Activated T-helper 2 cell treated with anti-CD3 and anti-CD28 coated beads, Interferon-gamma antibody, Interleukin-2, Interleukin-4, amounts not matched to agents 10 μg/mL and 5 μg/mL and 100 μg/mL, durations not matched to agents 14 hours and 24 hours and 36 hours (primary cell): ENCODE measurements at regions of chr1 and their contacts with region 1.

Region 1: GRCh38 chr1:28115267-28115666 is 26.9 kb upstream of the EYA3 start:
- DNase-seq: peak; percentile 36
- H3K4me3 Mint-ChIP-seq: no peak overlapping the region
- H3K27ac Mint-ChIP-seq: no peak overlapping the region
- H3K4me1 Mint-ChIP-seq: peaks cover 20% of the 10 kb centered on the region
- H3K27me3 Mint-ChIP-seq: peaks cover 50% of the 10 kb centered on the region

Region 2: DNA sequence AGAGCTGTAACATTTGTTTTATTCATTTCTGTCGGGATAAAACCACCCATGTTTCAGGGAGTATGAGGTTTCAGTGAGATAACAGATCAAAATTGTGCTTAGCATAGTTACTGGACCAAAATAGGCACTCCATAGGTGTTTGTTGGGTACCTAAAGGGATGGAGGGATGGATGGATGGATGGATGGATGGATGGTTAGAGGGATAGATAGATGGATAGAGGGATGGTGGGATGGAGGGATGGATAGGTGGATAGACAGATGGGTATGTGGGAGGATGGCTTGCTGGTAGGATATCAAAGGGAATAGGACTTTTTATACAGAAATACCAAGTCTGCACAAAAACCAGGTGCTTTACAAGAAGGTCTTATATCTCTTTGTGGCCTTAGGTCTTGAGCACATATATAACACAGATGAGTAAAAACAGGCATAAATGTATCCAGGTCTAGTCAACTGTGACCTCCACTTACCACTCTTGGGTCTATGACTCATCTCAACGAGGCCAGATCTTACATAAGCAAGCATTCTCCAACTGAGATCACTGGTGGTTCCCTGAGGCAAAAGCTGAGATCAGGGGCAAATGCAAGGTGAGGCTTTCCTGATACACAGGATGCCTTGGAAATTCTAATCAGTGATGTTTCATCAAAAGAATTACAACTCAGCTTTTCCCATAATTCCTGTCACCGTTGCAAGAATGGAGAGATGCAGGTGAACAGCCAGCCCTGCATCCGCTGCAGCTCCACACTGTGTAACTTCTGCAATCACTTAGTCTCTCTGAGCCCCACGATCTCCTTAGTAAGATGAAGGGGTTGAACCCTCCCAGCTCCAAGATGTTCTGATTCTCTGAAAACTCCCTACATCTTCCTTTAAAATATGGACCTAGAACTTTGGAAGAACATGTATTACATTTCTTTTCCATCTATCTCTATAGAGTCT is 29.2 kb after region 1 on chr1:
- intact Hi-C with region 1: loop called (anchors 1 kb)
- DNase-seq: no peak
- H3K4me3 Mint-ChIP-seq: no peak overlapping the region
- H3K27ac Mint-ChIP-seq: no peak overlapping the region
- H3K4me1 Mint-ChIP-seq: peaks cover 11% of the 10 kb centered on the region
- H3K27me3 Mint-ChIP-seq: peaks cover 58% of the 10 kb centered on the region

Region 3: GRCh38 chr1:28172713-28173150 is 57.5 kb after region 1 on chr1:
- intact Hi-C with region 1: loop called (anchors 1 kb)
- DNase-seq: peak; percentile 65
- H3K4me3 Mint-ChIP-seq: peak overlapping the region; percentile 10
- H3K27ac Mint-ChIP-seq: no peak overlapping the region
- H3K4me1 Mint-ChIP-seq: peaks cover 37% of the 10 kb centered on the region
- H3K27me3 Mint-ChIP-seq: peaks cover 56% of the 10 kb centered on the region